ENCODE measurements at regions of chr13 and their contacts with region 1.

Region 1: GRCh38 chr13:39602614-39603366 is at the start of gene LHFPL6:
- DNase-seq: no peak
- ATAC-seq: peak; percentile 97
- H3K4me3 ChIP-seq: peak within 1 kb of the TSS; percentile 76 to 87
- H3K27ac ChIP-seq: peak within 1 kb of the TSS; percentile 89
- H3K4me1 ChIP-seq: peaks cover 19% of the 10 kb centered on the region
- H3K27me3 ChIP-seq: no peaks in the 10 kb centered on the region
- CTCF ChIP-seq: peak; percentile 53
- total RNA-seq, gene LHFPL6: 25.7 TPM

Region 2: GRCh38 chr13:39462428-39462827 is 140.4 kb before region 1 on chr13:
- CTCF ChIA-PET with region 1: no interaction called
- POLR2A ChIA-PET with region 1: interaction called, 16 read pairs
- in situ Hi-C with region 1: no loop called
- intact Hi-C with region 1: no loop called
- DNase-seq: no peak
- ATAC-seq: no peak
- H3K4me3 ChIP-seq: no peak overlapping the region
- H3K27ac ChIP-seq: no peak overlapping the region
- H3K4me1 ChIP-seq: no peaks in the 10 kb centered on the region
- H3K27me3 ChIP-seq: no peaks in the 10 kb centered on the region
- CTCF ChIP-seq: no peak

Region 3: DNA sequence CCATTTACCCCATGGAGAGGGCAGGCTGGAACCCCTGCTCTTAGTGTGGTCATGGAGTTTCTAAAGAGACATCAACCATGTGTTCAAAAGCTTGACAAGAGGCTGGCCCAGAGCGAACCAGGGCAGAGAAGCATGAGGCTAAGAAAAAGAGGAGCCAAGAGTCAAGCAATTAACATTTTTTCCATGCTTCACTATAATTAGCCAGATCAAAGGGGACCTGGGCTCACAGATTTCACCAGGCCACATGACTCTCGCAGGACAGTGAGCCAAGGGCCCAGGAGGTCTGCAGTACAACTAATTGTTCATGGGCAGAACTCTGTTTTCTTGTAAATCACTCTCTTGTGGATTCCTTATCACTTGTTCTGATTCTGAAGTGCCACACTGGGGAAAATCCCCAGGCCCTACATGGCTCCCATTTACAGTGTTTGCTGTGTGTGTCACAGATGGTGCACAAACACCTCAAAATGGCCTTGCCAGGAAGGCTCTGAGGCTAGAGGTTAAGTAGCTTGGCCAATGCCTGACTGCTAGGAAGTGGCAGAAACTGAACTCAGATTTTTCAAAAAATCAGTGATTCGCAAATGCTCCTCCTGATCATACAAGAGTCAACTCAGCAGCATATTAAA is 101.0 kb before region 1 on chr13:
- CTCF ChIA-PET with region 1: no interaction called
- POLR2A ChIA-PET with region 1: no interaction called
- in situ Hi-C with region 1: no loop called
- intact Hi-C with region 1: loop called (anchors 10 kb)
- DNase-seq: no peak
- ATAC-seq: peak; percentile 72
- H3K4me3 ChIP-seq: no peak overlapping the region
- H3K27ac ChIP-seq: no peak overlapping the region
- H3K4me1 ChIP-seq: peaks cover 13% of the 10 kb centered on the region
- H3K27me3 ChIP-seq: no peaks in the 10 kb centered on the region
- CTCF ChIP-seq: no peak

Measured in Panc1 (cell line).